ENCODE measurements at regions of chr3 and their contacts with region 1.

Region 1: GRCh38 chr3:112111785-112112402 is 21.2 kb downstream of the GCSAM start:
- DNase-seq: peak; percentile 77
- H3K4me3 Mint-ChIP-seq: no peak overlapping the region
- H3K27ac Mint-ChIP-seq: no peak overlapping the region
- H3K4me1 Mint-ChIP-seq: peaks cover 14% of the 10 kb centered on the region
- H3K27me3 Mint-ChIP-seq: no peaks in the 10 kb centered on the region

Region 2: DNA sequence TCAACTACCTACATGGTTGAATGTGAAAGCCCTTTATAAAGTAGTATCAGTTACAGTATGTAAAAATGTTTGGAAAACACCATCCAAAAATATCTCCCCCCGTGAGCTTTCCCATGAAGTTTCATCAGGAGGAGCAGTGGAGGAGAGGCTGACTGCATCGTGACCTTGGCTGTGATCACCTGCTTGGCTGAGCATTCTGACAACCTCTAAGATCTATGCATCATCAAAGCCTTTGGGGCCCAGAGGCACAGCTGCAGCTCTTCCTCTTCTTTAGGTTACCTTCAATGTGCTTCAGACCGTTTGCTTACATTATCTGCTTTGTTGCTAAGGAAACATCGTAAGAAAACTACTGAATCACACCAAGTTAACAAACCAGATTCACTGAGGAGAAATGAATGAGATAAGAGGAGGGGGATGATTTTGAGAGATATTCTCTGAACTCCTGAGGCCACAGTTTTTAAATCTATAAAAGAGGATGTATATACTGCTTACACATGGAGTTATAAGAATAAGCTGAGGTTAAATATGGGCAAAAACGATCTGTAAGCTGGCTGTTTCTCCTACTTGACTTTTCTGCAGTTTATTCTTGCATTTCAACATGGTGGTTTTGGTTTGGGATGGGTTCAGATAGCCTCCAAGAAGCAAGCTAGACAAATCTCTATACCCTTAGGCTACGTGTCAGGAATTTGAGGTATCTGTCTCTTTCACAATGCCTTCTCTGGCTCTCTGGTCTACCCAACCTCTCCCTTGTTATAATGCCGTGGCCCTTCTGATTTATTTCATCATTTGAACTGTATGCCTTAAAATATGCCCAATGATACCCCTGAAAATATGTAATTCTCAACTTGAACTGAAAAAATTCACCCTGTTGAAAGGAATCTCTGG is 17.2 kb after region 1 on chr3:
- CTCF ChIA-PET with region 1: interaction called, 14 read pairs
- DNase-seq: peak; percentile 76
- H3K4me3 Mint-ChIP-seq: peak overlapping the region; percentile 1
- H3K27ac Mint-ChIP-seq: peak overlapping the region; percentile 79
- H3K4me1 Mint-ChIP-seq: peaks cover 88% of the 10 kb centered on the region
- H3K27me3 Mint-ChIP-seq: no peaks in the 10 kb centered on the region

Region 3: DNA sequence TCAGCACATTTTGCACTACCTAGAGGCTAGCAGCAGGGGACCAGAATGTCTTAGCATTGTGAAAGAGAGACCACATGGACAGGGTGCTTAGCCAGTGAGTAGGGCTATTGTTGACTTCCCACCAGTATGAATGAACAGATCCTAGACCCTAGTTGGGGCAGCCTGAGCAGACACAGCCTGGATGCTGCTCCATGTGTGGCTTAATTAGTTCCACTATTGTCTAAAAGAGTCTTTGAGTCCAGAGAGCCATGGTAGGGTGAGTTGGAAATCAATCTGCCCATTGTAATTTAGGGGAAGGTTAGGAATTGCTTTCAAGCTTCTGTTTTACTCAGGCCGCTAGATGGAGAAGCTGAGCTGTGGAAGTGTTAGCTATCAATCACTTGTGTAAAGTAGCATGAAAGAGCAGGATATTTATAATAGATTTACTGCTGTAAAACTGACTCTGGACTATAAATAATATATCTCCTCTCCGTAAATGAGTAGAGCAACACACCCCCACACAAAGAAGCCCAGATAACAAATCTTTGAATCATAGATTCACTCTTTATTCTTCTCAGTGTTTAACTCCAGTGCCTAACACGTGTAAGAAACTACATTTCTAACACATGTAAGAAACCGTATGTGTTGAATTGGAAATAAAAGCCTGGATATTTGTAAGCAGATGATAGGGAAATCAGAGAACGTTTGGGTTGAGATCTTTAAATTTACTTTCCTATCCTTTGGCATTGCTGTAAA is 25.2 kb after region 1 on chr3:
- CTCF ChIA-PET with region 1: interaction called, 22 read pairs
- DNase-seq: peak; percentile 65
- H3K4me3 Mint-ChIP-seq: no peak overlapping the region
- H3K27ac Mint-ChIP-seq: no peak overlapping the region
- H3K4me1 Mint-ChIP-seq: peaks cover 52% of the 10 kb centered on the region
- H3K27me3 Mint-ChIP-seq: no peaks in the 10 kb centered on the region

Region 4: GRCh38 chr3:112167758-112168157 is 55.9 kb after region 1 on chr3:
- CTCF ChIA-PET with region 1: no interaction called
- DNase-seq: no peak
- H3K4me3 Mint-ChIP-seq: no peak overlapping the region
- H3K27ac Mint-ChIP-seq: no peak overlapping the region
- H3K4me1 Mint-ChIP-seq: no peaks in the 10 kb centered on the region
- H3K27me3 Mint-ChIP-seq: peaks cover 13% of the 10 kb centered on the region

Region 5: GRCh38 chr3:112187300-112187699 is 75.4 kb after region 1 on chr3:
- CTCF ChIA-PET with region 1: no interaction called
- DNase-seq: no peak
- H3K4me3 Mint-ChIP-seq: no peak overlapping the region
- H3K27ac Mint-ChIP-seq: no peak overlapping the region
- H3K4me1 Mint-ChIP-seq: peaks cover 3% of the 10 kb centered on the region
- H3K27me3 Mint-ChIP-seq: peaks cover 8% of the 10 kb centered on the region

Measured in activated naive CD4-positive, alpha-beta T cell treated with anti-CD3 and anti-CD28 coated beads, Interleukin-2, amount 10 ng/mL, durations not matched to agents 7 days and 5 days (primary cell).